Stomach (tissue), 19 donors: ENCODE measurements at regions of chr21 and their contacts with region 1.

Region 1: DNA sequence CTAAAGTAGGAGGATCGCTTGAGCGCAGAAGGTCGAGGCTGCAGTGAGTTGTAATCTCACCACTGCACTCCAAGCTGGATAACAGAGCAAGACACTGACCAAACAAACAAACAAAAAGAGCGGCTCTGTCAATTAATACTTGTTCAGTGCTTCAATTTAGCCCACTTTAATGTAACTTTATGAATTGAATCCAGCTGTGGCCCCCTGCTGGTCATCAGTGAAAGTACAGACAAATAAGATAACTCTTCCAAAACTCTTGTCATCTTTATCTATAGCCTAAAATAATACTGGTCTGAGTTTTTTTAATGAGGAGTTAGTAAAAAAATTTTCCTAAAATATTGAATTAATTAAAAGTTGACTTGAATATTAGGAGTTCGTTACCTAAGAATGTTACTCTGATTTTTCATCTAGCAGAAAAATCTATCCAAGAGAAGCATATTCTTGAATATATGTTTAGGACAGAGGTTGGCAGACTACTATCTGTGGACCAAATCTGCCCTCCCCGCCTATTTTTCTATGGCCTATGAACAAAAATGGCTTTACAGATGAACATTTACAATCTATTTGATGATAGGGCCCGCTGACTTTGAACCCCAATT is 26.1 kb downstream of the ATP5PF start:
- DNase-seq: peak; percentile 40 to 68
- H3K4me3 ChIP-seq: no peak overlapping the region
- H3K27ac ChIP-seq: no peak overlapping the region
- H3K4me1 ChIP-seq: no peaks in the 10 kb centered on the region
- H3K27me3 ChIP-seq: no peaks in the 10 kb centered on the region
- CTCF ChIP-seq: peak in 5 of 7 experiments; percentile 39 to 85 (median 70)
- EP300 ChIP-seq: no peak
- POLR2A ChIP-seq: no peak

Region 2: DNA sequence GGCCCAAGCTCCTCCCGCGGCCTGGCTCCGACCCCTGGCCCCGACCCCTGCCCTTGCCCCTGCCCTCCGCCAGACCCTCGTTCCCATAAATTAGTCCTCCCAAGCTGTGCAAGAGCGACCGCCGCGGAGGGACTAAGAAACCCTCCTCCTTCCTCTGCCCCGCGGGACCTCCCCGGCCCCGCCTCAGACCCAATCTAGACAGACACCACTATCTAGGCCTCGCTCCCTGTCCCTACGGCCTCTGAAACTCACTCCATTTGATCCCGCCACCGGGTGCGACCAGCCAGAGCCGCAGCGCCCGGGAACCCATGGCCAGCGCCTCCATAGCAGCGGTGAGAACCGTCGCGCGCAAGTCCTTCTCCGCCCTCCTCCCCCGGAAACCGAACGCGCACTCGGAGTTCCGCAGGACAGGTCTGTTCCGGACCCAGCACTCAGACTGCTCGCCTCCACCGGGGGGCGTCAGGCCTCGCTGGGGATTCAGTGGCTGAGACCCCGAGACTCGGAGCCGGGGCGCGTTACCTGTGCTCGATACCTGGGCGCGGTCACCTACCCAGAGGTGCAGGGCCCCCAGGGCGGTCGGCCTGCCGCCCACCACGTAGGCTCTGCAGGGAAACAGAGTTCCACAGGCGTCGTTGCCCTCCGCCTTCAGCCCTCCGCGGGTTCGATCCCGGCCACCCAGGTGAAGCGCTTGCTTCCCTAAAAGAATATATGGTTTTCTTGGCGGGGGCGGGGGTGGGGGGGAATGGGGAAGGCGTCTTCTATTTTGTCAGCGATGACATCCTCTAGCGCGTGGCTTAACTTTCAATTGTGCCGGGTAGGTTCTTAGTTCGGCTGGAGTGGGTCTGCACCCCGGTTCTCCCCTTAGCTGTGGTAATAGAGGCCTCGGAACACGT is 101.2 kb before region 1 on chr21 and contains the start of gene MRPL39:
- intact Hi-C with region 1: loop called (anchors 5 kb)
- DNase-seq: peak; percentile 85 to 96
- H3K4me3 ChIP-seq: peak within 1 kb of the TSS; percentile 80 to 90 (median 86)
- H3K27ac ChIP-seq: peak within 1 kb of the TSS; percentile 69 to 88 (median 81)
- H3K4me1 ChIP-seq: peaks cover 15 to 47% (median 39%) of the 10 kb centered on the region in 4 donors
- H3K27me3 ChIP-seq: no peaks in the 10 kb centered on the region
- CTCF ChIP-seq: peak in 4 of 7 experiments; percentile 26 to 55 (median 36)
- EP300 ChIP-seq: no peak
- POLR2A ChIP-seq: no peak
- total RNA-seq, gene MRPL39: 2.9 to 65.6 (median 20.2) TPM in 4 of 5 donors, not detected in the other